IMR-90 (cell line): ENCODE measurements at regions of chr2 and their contacts with region 1.

Region 1: DNA sequence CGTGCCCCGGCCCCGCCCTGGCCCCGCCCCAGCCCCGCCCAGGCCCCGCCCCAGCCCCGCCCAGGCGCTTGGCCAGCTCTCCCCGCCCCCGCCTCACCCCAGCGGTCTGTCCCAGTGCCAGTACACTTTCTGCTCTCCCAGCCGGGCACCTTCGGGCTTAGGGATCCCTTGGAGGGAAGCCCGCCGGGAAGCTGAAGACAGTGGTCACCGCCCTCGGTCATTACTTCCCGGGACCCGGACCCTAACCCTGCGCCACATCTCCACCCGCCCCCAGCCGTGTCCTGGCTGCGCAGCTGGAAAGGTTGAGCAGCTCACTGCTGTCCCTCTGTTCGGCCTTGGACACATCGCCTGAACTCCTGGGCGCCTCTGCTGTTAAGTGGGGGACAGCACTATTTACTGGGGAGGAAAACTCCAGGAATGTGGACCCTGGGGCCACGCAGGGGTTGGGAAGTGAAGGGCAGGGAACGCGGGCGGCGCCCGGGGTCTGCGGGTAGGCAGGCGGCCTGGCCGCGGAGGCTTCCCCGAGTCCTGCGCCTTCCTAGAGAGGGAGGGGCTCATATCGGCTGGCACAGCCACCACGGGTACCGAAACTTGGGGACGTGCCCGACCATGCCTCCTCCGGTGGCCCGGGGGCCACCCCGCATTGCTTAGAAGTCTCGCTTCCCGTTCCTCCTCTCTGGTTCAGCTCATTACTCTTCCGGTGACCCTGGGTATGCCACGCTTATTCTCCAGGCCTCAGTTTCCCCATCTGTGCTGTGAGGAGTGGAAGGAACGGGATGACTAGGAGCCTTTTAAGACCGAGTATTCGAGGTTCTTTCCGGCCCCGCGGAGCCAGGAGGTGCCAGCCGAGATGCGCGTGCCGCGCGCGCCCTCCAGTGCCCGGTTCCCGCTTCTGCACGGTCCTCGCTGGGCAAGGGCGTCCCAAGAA is 121.0 kb downstream of the GYPC start:
- DNase-seq: peak; percentile 62
- ATAC-seq: peak; percentile 97
- H3K4me3 ChIP-seq: peak overlapping the region; percentile 30
- H3K27ac ChIP-seq: no peak overlapping the region
- H3K4me1 ChIP-seq: no peaks in the 10 kb centered on the region
- H3K27me3 ChIP-seq: peaks cover 15% of the 10 kb centered on the region; the same call in 1 of the 2 replicates
- CTCF ChIP-seq: peak; percentile 97
- POLR2A ChIP-seq: no peak
- RAD21 ChIP-seq: peak; percentile 98

Region 2: GRCh38 chr2:124810132-124810531 is 1966.8 kb before region 1 on chr2:
- CTCF ChIA-PET with region 1: no interaction called
- POLR2A ChIA-PET with region 1: no interaction called
- dilution Hi-C with region 1: no loop called
- in situ Hi-C with region 1: no loop called
- intact Hi-C with region 1: loop called (anchors 10 kb)
- DNase-seq: peak; percentile 44
- ATAC-seq: peak; percentile 40
- H3K4me3 ChIP-seq: no peak overlapping the region
- H3K27ac ChIP-seq: no peak overlapping the region
- H3K4me1 ChIP-seq: no peaks in the 10 kb centered on the region
- H3K27me3 ChIP-seq: no peaks in the 10 kb centered on the region
- CTCF ChIP-seq: peak; percentile 34
- POLR2A ChIP-seq: no peak
- RAD21 ChIP-seq: peak; percentile 51

Region 3: DNA sequence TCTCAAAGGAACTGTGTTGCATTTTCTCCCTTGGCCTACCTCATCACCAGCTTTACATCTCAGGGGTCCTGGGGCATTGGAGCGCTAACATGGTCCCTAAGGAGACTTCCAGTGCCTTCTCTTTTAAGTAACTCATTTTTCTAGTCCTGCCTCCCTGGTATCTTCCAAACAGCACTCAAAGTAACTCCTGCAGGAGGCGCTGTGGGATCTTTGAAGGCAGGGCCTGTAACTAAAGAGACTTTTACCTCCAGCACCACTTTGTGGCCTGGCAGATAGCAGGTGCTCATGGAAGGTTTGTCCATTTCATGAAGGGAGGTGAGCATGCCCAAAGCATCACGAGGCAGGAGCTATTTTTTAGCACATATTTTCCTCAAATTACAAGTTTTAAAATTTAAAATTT is 532.0 kb before region 1 on chr2:
- CTCF ChIA-PET with region 1: interaction called, 3 read pairs
- POLR2A ChIA-PET with region 1: no interaction called
- dilution Hi-C with region 1: no loop called
- in situ Hi-C with region 1: no loop called
- intact Hi-C with region 1: loop called (anchors 10 kb)
- DNase-seq: no peak
- ATAC-seq: no peak
- H3K4me3 ChIP-seq: no peak overlapping the region
- H3K27ac ChIP-seq: no peak overlapping the region
- H3K4me1 ChIP-seq: no peaks in the 10 kb centered on the region
- H3K27me3 ChIP-seq: no peaks in the 10 kb centered on the region
- CTCF ChIP-seq: peak; percentile 22; the same call in 1 of the 2 replicates
- POLR2A ChIP-seq: no peak
- RAD21 ChIP-seq: peak; percentile 38

Region 4: DNA sequence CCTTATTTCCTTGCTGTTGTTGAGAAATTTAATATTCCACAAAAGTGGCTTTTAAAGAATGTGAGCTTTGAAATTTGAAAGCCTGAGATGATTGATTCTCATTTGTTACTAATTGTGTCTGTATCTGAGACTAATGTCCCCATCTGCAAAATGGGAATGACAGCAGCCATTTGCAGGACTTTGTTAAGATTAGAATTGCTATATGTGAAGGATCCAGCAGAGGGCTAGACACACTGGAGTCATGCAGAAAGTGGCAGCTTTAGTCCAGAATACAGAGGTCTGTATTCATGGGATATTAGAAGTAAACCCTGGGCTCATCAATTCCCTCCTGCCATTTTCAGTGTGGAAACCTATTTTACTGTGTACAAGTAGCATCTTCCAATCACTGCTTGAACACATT is 417.5 kb before region 1 on chr2:
- CTCF ChIA-PET with region 1: no interaction called
- POLR2A ChIA-PET with region 1: no interaction called
- dilution Hi-C with region 1: no loop called
- in situ Hi-C with region 1: no loop called
- intact Hi-C with region 1: loop called (anchors 1 kb)
- DNase-seq: peak; percentile 4
- ATAC-seq: no peak
- H3K4me3 ChIP-seq: no peak overlapping the region
- H3K27ac ChIP-seq: no peak overlapping the region
- H3K4me1 ChIP-seq: no peaks in the 10 kb centered on the region
- H3K27me3 ChIP-seq: no peaks in the 10 kb centered on the region
- CTCF ChIP-seq: peak; percentile 32
- POLR2A ChIP-seq: no peak
- RAD21 ChIP-seq: peak; percentile 30; the same call in 1 of the 2 replicates

Region 5: GRCh38 chr2:126527836-126528507 is 249.0 kb before region 1 on chr2:
- CTCF ChIA-PET with region 1: interaction called, 16 read pairs
- POLR2A ChIA-PET with region 1: no interaction called
- dilution Hi-C with region 1: no loop called
- in situ Hi-C with region 1: loop called (anchors 5 kb)
- intact Hi-C with region 1: loop called (anchors 1 kb)
- DNase-seq: peak; percentile 58
- ATAC-seq: 0 out of 2 replicates have a peak, but pooled peaks have one; percentile 42
- H3K4me3 ChIP-seq: no peak overlapping the region
- H3K27ac ChIP-seq: no peak overlapping the region
- H3K4me1 ChIP-seq: no peaks in the 10 kb centered on the region
- H3K27me3 ChIP-seq: no peaks in the 10 kb centered on the region
- CTCF ChIP-seq: peak; percentile 62
- POLR2A ChIP-seq: no peak
- RAD21 ChIP-seq: peak; percentile 70

Region 6: GRCh38 chr2:126634273-126634861 is 142.6 kb before region 1 on chr2:
- CTCF ChIA-PET with region 1: no interaction called
- POLR2A ChIA-PET with region 1: no interaction called
- dilution Hi-C with region 1: no loop called
- in situ Hi-C with region 1: no loop called
- intact Hi-C with region 1: loop called (anchors 5 kb)
- DNase-seq: peak; percentile 17
- ATAC-seq: peak; percentile 46; the same call in 1 of the 2 replicates
- H3K4me3 ChIP-seq: no peak overlapping the region
- H3K27ac ChIP-seq: no peak overlapping the region
- H3K4me1 ChIP-seq: no peaks in the 10 kb centered on the region
- H3K27me3 ChIP-seq: peaks cover 8% of the 10 kb centered on the region
- CTCF ChIP-seq: peak; percentile 49
- POLR2A ChIP-seq: no peak
- RAD21 ChIP-seq: peak; percentile 37

Region 7: DNA sequence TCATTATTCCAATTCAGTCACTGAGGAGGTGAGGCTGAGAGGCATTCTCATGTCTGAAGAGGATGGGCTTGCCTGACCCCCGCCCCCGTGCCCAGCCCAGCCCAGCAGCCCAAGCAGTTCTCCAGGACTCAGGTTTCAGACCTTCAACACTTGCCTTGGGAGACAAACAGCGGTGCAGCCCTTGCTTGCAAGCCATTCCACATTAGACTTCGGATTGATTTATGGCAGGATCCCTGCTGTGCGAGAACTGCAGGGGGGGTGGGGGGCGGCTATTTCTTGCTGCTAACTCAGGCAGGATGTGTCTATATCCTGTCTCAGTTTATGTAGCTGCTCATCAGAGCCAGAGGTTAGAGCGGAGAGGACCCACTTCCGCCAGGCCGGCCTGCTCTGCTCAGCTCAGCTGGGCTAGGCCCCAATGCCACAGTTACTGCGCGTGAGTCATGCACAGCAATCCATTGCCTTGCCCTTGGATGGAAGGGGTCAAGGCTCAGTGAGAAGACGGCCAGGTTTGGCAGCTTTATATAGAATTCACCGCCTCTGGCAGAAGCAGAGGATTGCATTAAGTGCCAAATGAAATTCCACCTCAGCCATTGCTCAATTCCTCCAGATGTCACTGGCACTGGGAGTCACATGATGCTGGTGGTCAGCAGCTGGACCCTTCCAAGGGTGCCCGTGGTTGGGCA is 119.2 kb before region 1 on chr2:
- CTCF ChIA-PET with region 1: no interaction called
- POLR2A ChIA-PET with region 1: no interaction called
- dilution Hi-C with region 1: no loop called
- in situ Hi-C with region 1: no loop called
- intact Hi-C with region 1: loop called (anchors 1 kb)
- DNase-seq: peak; percentile 99
- ATAC-seq: peak; percentile 75
- H3K4me3 ChIP-seq: no peak overlapping the region
- H3K27ac ChIP-seq: peak overlapping the region; percentile 91
- H3K4me1 ChIP-seq: peaks cover 19% of the 10 kb centered on the region
- H3K27me3 ChIP-seq: no peaks in the 10 kb centered on the region
- CTCF ChIP-seq: no peak; the same call in 1 of the 2 replicates
- POLR2A ChIP-seq: no peak; the same call in 1 of the 2 replicates
- RAD21 ChIP-seq: peak; percentile 1; the same call in 1 of the 2 replicates

Region 8: DNA sequence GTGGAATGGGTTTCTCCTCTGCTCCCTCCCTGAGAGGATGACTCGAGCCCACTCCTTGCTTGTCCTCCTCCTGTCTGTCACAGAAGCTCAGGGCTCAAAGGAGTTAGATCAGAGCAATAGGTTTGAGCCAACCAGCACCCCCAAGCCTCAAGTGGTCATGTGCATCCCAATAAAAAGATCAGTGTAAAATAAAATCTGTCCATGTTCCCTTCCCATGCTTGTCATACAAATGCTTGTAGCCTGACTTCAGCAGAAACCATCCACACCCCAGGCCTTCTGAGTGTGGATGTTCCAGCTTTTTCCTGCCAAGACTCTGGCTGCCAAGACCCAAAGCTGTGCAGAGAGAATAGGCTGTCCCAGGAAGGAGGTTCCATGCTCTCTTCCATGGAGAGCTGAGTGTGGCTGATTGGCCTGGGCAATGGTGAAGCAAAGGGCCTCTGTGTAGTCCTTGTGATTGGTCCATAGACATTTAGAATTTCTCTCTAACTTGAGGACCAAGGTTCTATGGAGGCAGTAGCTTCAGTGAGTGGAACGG is 53.6 kb before region 1 on chr2:
- CTCF ChIA-PET with region 1: no interaction called
- POLR2A ChIA-PET with region 1: no interaction called
- dilution Hi-C with region 1: no loop called
- in situ Hi-C with region 1: no loop called
- intact Hi-C with region 1: no loop called
- DNase-seq: no peak
- ATAC-seq: no peak
- H3K4me3 ChIP-seq: no peak overlapping the region
- H3K27ac ChIP-seq: no peak overlapping the region
- H3K4me1 ChIP-seq: no peaks in the 10 kb centered on the region
- H3K27me3 ChIP-seq: peaks cover 2% of the 10 kb centered on the region
- CTCF ChIP-seq: no peak
- POLR2A ChIP-seq: no peak
- RAD21 ChIP-seq: no peak

Region 9: DNA sequence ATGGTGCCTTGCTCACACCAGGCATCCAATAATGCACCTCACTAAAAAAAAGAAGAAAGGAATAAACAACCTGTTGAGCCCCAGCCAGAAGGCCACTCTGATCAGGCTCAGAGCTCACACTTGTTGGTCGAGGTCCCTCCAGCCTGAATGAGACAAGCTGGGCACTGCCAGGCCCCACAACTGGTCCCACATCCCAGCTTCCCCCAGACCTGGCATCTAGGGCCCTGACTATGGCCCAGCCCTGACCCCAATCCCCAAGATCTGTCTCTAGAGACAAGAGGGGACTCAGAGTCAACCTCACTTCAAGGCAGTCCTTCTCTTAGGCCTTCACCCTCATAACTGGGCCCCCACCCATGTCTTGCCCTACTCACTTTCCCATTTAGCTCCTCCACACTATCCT is 144.1 kb after region 1 on chr2:
- CTCF ChIA-PET with region 1: no interaction called
- POLR2A ChIA-PET with region 1: no interaction called
- dilution Hi-C with region 1: no loop called
- in situ Hi-C with region 1: no loop called
- intact Hi-C with region 1: no loop called
- DNase-seq: no peak
- ATAC-seq: no peak
- H3K4me3 ChIP-seq: no peak overlapping the region
- H3K27ac ChIP-seq: no peak overlapping the region
- H3K4me1 ChIP-seq: no peaks in the 10 kb centered on the region
- H3K27me3 ChIP-seq: no peaks in the 10 kb centered on the region; the same call in 1 of the 2 replicates
- CTCF ChIP-seq: no peak
- POLR2A ChIP-seq: no peak
- RAD21 ChIP-seq: no peak